CD4-positive, alpha-beta T cell (primary cell): ENCODE measurements at regions of chr22 and their contacts with region 1.

Region 1: DNA sequence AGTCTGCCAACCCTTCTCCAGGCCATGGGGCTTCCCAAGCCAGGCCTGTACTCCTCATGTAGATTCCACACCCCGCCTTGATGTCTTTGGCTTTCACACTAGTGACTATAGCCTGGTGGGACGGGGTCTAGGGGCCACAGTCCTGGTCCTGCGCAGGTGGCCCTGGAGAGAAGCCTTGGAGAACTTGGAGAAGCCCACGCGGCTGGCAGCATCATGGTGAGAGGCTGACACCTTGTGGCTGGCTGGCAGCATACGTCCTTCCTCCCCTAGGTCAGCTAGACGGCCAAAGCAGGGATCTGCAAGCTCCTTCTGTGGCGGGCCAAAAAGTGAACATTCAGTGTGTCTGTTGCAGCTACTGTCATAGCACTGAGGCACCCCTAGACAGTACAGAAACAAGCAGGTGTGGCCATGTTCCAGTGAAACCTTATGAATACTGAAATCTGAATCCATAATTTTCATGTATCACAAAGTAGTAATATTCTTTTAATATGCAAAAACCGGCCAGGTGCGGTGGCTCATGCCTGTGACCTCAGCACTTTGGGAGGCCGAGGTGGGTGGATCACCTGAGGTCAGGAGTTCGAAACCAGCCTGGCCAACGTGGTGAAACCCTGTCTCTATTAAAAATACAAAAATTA is 42.0 kb downstream of the FAM83F start:
- DNase-seq: peak in 13 of 14 experiments; percentile 25 to 77 (median 39)
- ATAC-seq: peak; percentile 74
- H3K4me3 ChIP-seq: no peak overlapping the region
- H3K4me3 Mint-ChIP-seq: no peak overlapping the region
- H3K27ac ChIP-seq: no peak overlapping the region
- H3K27ac Mint-ChIP-seq: no peak overlapping the region
- H3K4me1 ChIP-seq: no peaks in the 10 kb centered on the region
- H3K4me1 Mint-ChIP-seq: no peaks in the 10 kb centered on the region
- H3K27me3 ChIP-seq: peaks cover 0 to 6% of the 10 kb centered on the region in 2 experiments
- H3K27me3 Mint-ChIP-seq: peaks cover 12% of the 10 kb centered on the region
- CTCF ChIP-seq: peak; percentile 63

Region 2: GRCh38 chr22:39343259-39344048 is 693.3 kb before region 1 on chr22:
- CTCF ChIA-PET with region 1: no interaction called
- POLR2A ChIA-PET with region 1: no interaction called
- intact Hi-C with region 1: loop called in 1 of 2 experiments (anchors 10 kb)
- DNase-seq: peak; percentile 39 to 76 (median 51)
- ATAC-seq: peak; percentile 93
- H3K4me3 ChIP-seq: no peak overlapping the region
- H3K4me3 Mint-ChIP-seq: no peak overlapping the region
- H3K27ac ChIP-seq: no peak overlapping the region
- H3K27ac Mint-ChIP-seq: no peak overlapping the region
- H3K4me1 ChIP-seq: peaks cover 6% of the 10 kb centered on the region
- H3K4me1 Mint-ChIP-seq: peaks cover 6% of the 10 kb centered on the region
- H3K27me3 ChIP-seq: peaks cover 0 to 4% of the 10 kb centered on the region in 2 experiments
- H3K27me3 Mint-ChIP-seq: peaks cover 8% of the 10 kb centered on the region
- CTCF ChIP-seq: peak; percentile 71

Region 3: DNA sequence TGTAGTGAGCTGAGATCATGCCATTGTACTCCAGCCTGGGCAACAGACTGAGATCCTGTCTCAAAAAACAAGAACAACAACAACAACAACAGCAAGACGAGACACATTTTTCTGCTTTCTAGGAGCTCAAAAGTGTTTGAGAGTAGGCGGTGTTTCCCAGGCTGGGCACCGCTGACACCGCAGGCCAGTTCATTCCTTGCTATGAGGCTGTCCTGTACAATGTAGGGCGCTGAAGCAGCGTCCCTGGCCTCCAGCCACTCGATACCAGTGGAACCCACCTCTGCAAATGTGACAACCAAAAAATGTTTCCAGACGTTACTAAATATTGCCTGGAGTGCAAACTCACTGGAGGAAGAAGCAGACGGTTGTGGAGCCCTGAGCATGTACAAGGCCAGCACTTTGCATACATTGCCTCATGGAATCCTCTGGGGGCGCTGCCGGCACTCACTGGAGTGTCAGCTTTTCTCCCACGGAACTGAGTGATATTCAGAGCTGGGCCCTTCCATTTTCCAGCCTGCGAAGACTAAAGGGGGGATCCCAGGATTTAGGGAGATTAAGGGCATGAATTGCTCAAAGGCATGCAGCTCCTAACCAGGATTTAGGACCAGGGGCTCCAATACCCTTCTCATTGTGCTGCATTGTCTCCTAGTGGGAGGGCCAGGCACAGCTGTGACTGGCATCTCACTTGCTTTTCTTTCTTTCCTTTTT is 540.4 kb before region 1 on chr22:
- CTCF ChIA-PET with region 1: no interaction called
- POLR2A ChIA-PET with region 1: no interaction called
- intact Hi-C with region 1: loop called (anchors 2 kb)
- DNase-seq: peak in 12 of 14 experiments; percentile 29 to 75 (median 48)
- ATAC-seq: peak; percentile 77
- H3K4me3 ChIP-seq: no peak overlapping the region
- H3K4me3 Mint-ChIP-seq: no peak overlapping the region
- H3K27ac ChIP-seq: no peak overlapping the region
- H3K27ac Mint-ChIP-seq: no peak overlapping the region
- H3K4me1 ChIP-seq: peaks cover 14% of the 10 kb centered on the region
- H3K4me1 Mint-ChIP-seq: peaks cover 11% of the 10 kb centered on the region
- H3K27me3 ChIP-seq: no peaks in the 10 kb centered on the region
- H3K27me3 Mint-ChIP-seq: no peaks in the 10 kb centered on the region
- CTCF ChIP-seq: peak; percentile 72